PC-9 (cell line): ENCODE measurements at regions of chr11 and their contacts with region 1.

Region 1: GRCh38 chr11:114262681-114263512 is 33.3 kb upstream of the NNMT start:
- DNase-seq: peak in 1 of 2 experiments; percentile 52
- H3K4me3 ChIP-seq: no peak overlapping the region
- H3K27ac ChIP-seq: no peak overlapping the region
- H3K4me1 ChIP-seq: no peaks in the 10 kb centered on the region
- H3K27me3 ChIP-seq: peaks cover 83% of the 10 kb centered on the region
- CTCF ChIP-seq: peak; percentile 58

Region 2: GRCh38 chr11:113305440-113306336 is 957.2 kb before region 1 on chr11:
- CTCF ChIA-PET with region 1: no interaction called
- POLR2A ChIA-PET with region 1: no interaction called
- intact Hi-C with region 1: loop called (anchors 1 kb)
- DNase-seq: peak; percentile 56 to 69
- H3K4me3 ChIP-seq: no peak overlapping the region
- H3K27ac ChIP-seq: no peak overlapping the region
- H3K4me1 ChIP-seq: no peaks in the 10 kb centered on the region
- H3K27me3 ChIP-seq: peaks cover 17% of the 10 kb centered on the region; the same call in 1 of the 2 replicates
- CTCF ChIP-seq: peak; percentile 96

Region 3: GRCh38 chr11:113532697-113533424 is 730.0 kb before region 1 on chr11:
- CTCF ChIA-PET with region 1: no interaction called
- POLR2A ChIA-PET with region 1: no interaction called
- intact Hi-C with region 1: loop called (anchors 10 kb)
- DNase-seq: peak in 1 of 2 experiments; percentile 57
- H3K4me3 ChIP-seq: no peak overlapping the region
- H3K27ac ChIP-seq: no peak overlapping the region
- H3K4me1 ChIP-seq: no peaks in the 10 kb centered on the region
- H3K27me3 ChIP-seq: peaks cover 51% of the 10 kb centered on the region
- CTCF ChIP-seq: peak; percentile 90

Region 4: DNA sequence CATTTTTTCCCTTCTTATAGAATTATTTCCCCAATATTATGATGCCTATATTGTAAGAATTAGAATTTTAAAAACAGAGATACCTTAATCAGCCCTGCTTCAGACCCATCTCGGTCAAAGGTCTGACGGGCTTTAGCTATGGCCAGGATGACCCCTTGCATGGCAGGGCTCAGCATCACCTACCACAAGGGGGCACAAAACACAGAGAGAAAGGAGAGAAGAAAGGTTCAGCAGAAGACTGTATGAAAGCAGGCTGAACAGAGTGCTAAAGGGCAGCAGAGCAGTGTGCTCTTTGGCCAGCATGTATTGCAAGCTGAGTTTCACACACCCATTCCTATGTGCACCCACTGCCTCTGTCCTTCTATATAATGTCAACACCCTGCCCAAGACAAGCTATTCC is 456.5 kb before region 1 on chr11:
- CTCF ChIA-PET with region 1: no interaction called
- POLR2A ChIA-PET with region 1: no interaction called
- intact Hi-C with region 1: loop called (anchors 2 kb)
- DNase-seq: peak in 1 of 2 experiments; percentile 5
- H3K4me3 ChIP-seq: no peak overlapping the region
- H3K27ac ChIP-seq: no peak overlapping the region
- H3K4me1 ChIP-seq: no peaks in the 10 kb centered on the region
- H3K27me3 ChIP-seq: no peaks in the 10 kb centered on the region
- CTCF ChIP-seq: peak; percentile 61

Region 5: GRCh38 chr11:113896156-113896879 is 366.6 kb before region 1 on chr11:
- CTCF ChIA-PET with region 1: interaction called, 5 read pairs
- POLR2A ChIA-PET with region 1: no interaction called
- intact Hi-C with region 1: loop called (anchors 1 kb)
- DNase-seq: no peak
- H3K4me3 ChIP-seq: no peak overlapping the region
- H3K27ac ChIP-seq: no peak overlapping the region
- H3K4me1 ChIP-seq: no peaks in the 10 kb centered on the region
- H3K27me3 ChIP-seq: peaks cover 46% of the 10 kb centered on the region
- CTCF ChIP-seq: peak; percentile 76

Region 6: GRCh38 chr11:113994077-113994954 is 268.6 kb before region 1 on chr11:
- CTCF ChIA-PET with region 1: interaction called, 3 read pairs
- POLR2A ChIA-PET with region 1: no interaction called
- intact Hi-C with region 1: loop called (anchors 1 kb)
- DNase-seq: no peak
- H3K4me3 ChIP-seq: no peak overlapping the region
- H3K27ac ChIP-seq: no peak overlapping the region
- H3K4me1 ChIP-seq: no peaks in the 10 kb centered on the region
- H3K27me3 ChIP-seq: peaks cover 48% of the 10 kb centered on the region
- CTCF ChIP-seq: peak; percentile 86

Region 7: GRCh38 chr11:114036156-114036811 is 226.6 kb before region 1 on chr11:
- CTCF ChIA-PET with region 1: no interaction called
- POLR2A ChIA-PET with region 1: no interaction called
- intact Hi-C with region 1: loop called (anchors 1 kb)
- DNase-seq: peak in 1 of 2 experiments; percentile 31
- H3K4me3 ChIP-seq: no peak overlapping the region
- H3K27ac ChIP-seq: no peak overlapping the region
- H3K4me1 ChIP-seq: no peaks in the 10 kb centered on the region; the same call in 1 of the 2 replicates
- H3K27me3 ChIP-seq: peaks cover 63% of the 10 kb centered on the region
- CTCF ChIP-seq: peak; percentile 63

Region 8: GRCh38 chr11:114366331-114367243 is 103.7 kb after region 1 on chr11:
- CTCF ChIA-PET with region 1: no interaction called
- POLR2A ChIA-PET with region 1: no interaction called
- intact Hi-C with region 1: no loop called
- DNase-seq: peak; percentile 32 to 68
- H3K4me3 ChIP-seq: no peak overlapping the region
- H3K27ac ChIP-seq: no peak overlapping the region
- H3K4me1 ChIP-seq: 0 out of 2 replicates have a peak, but pooled peaks cover 6% of the 10 kb centered on the region
- H3K27me3 ChIP-seq: no peaks in the 10 kb centered on the region
- CTCF ChIP-seq: no peak